Gastrocnemius medialis (tissue), 4 donors: ENCODE measurements at regions of chr17 and their contacts with region 1.

Region 1: DNA sequence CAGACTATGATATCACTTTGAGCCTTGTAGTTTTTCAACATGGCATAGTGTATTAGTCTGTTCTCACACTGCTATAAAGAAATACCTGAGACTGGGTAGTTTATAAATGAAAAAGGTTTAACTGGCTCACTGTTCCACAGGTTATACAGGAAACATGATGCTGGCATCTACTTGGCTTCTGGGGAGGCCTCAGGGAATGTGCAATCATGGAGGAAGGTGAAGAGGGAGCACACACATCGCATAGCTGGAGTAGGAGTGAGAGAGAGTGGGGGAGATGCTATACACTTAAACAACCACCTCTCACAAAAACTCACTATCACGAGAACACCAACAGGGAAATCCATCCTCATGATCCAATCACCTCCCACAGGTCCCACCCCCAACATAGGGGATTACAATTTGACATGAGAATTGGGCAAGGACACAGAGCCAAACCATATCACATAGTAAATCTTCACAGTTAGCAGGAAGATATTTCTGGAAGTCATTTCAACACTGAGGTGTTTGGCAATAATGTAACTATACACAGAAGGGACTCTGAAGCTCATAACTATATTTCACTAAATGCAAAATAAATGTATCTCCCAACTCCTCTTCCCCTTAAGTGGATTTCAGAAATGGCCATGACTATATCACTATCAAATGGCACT is 214.9 kb upstream of the CA10 start:
- DNase-seq: no peak
- ATAC-seq: no peak
- H3K4me3 ChIP-seq: no peak overlapping the region
- H3K27ac ChIP-seq: no peak overlapping the region
- H3K4me1 ChIP-seq: no peaks in the 10 kb centered on the region
- H3K27me3 ChIP-seq: no peaks in the 10 kb centered on the region
- CTCF ChIP-seq: no peak
- POLR2A ChIP-seq: no peak

Region 2: GRCh38 chr17:52227926-52228325 is 145.5 kb before region 1 on chr17:
- in situ Hi-C with region 1: no loop called
- intact Hi-C with region 1: no loop called
- DNase-seq: no peak
- ATAC-seq: no peak
- H3K4me3 ChIP-seq: no peak overlapping the region
- H3K27ac ChIP-seq: no peak overlapping the region
- H3K4me1 ChIP-seq: no peaks in the 10 kb centered on the region
- H3K27me3 ChIP-seq: no peaks in the 10 kb centered on the region
- CTCF ChIP-seq: no peak
- POLR2A ChIP-seq: no peak

Region 3: GRCh38 chr17:52255347-52255746 is 118.1 kb before region 1 on chr17:
- in situ Hi-C with region 1: loop called in 1 of 4 experiments (anchors 25 kb)
- intact Hi-C with region 1: no loop called
- DNase-seq: no peak
- ATAC-seq: no peak
- H3K4me3 ChIP-seq: no peak overlapping the region
- H3K27ac ChIP-seq: no peak overlapping the region
- H3K4me1 ChIP-seq: no peaks in the 10 kb centered on the region
- H3K27me3 ChIP-seq: no peaks in the 10 kb centered on the region
- CTCF ChIP-seq: no peak
- POLR2A ChIP-seq: no peak